ENCODE measurements at regions of chr15 and their contacts with region 1.

Region 1: DNA sequence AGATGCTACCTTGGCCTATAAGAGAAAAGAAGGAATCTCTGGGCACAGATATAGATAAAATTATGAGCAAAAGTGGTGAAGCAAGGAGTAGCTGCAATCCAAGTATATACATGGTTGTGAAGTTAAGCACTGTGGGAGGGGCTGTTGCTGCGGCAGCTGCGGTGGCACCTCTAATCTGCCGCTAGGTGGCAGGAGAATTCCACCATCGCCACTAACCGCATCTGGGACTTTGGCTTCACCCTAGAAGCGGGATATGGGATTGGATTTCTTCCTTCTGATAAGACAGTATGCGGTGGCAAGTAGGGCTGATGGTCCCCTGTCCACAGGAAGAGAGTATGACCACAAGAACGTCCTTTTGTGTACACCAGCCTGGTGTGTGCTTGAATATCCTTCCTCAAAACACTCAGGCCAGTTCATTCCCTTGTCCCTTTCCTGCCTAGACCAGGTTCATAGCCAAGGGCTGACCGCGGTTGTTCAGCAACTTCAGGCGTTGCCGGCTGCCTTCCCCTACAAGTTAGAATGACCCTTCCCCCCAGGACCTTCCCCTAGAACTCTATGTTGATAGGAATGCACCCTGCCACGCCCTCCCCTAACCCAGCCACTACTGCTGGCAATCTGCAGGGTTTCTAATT is 5.1 kb downstream of the MAGEL2 start:
- DNase-seq: peak; percentile 2
- H3K4me3 Mint-ChIP-seq: no peak overlapping the region
- H3K27ac Mint-ChIP-seq: no peak overlapping the region
- H3K4me1 Mint-ChIP-seq: no peaks in the 10 kb centered on the region
- H3K27me3 Mint-ChIP-seq: no peaks in the 10 kb centered on the region
- CTCF ChIP-seq: peak; percentile 61

Region 2: GRCh38 chr15:23616536-23616935 is 26.0 kb before region 1 on chr15:
- CTCF ChIA-PET with region 1: interaction called, 3 read pairs
- POLR2A ChIA-PET with region 1: no interaction called
- intact Hi-C with region 1: loop called (anchors 1 kb)
- DNase-seq: no peak
- H3K4me3 Mint-ChIP-seq: no peak overlapping the region
- H3K27ac Mint-ChIP-seq: no peak overlapping the region
- H3K4me1 Mint-ChIP-seq: no peaks in the 10 kb centered on the region
- H3K27me3 Mint-ChIP-seq: no peaks in the 10 kb centered on the region
- CTCF ChIP-seq: no peak

Region 3: GRCh38 chr15:23629234-23629805 is 13.2 kb before region 1 on chr15:
- CTCF ChIA-PET with region 1: interaction called, 17 read pairs
- POLR2A ChIA-PET with region 1: interaction called, 3 read pairs
- intact Hi-C with region 1: no loop called
- DNase-seq: no peak
- H3K4me3 Mint-ChIP-seq: no peak overlapping the region
- H3K27ac Mint-ChIP-seq: no peak overlapping the region
- H3K4me1 Mint-ChIP-seq: no peaks in the 10 kb centered on the region
- H3K27me3 Mint-ChIP-seq: no peaks in the 10 kb centered on the region
- CTCF ChIP-seq: peak; percentile 42

Region 4: GRCh38 chr15:23857028-23857641 is 214.6 kb after region 1 on chr15:
- CTCF ChIA-PET with region 1: interaction called, 49 read pairs
- POLR2A ChIA-PET with region 1: no interaction called
- intact Hi-C with region 1: no loop called
- DNase-seq: no peak
- H3K4me3 Mint-ChIP-seq: no peak overlapping the region
- H3K27ac Mint-ChIP-seq: no peak overlapping the region
- H3K4me1 Mint-ChIP-seq: no peaks in the 10 kb centered on the region
- H3K27me3 Mint-ChIP-seq: no peaks in the 10 kb centered on the region
- CTCF ChIP-seq: peak; percentile 17

Region 5: GRCh38 chr15:24966364-24967103 is 1324.0 kb after region 1 on chr15:
- CTCF ChIA-PET with region 1: no interaction called
- POLR2A ChIA-PET with region 1: no interaction called
- intact Hi-C with region 1: no loop called
- DNase-seq: no peak
- H3K4me3 Mint-ChIP-seq: no peak overlapping the region
- H3K27ac Mint-ChIP-seq: no peak overlapping the region
- H3K4me1 Mint-ChIP-seq: no peaks in the 10 kb centered on the region
- H3K27me3 Mint-ChIP-seq: no peaks in the 10 kb centered on the region
- CTCF ChIP-seq: no peak

Measured in MCF 10A (cell line).